ENCODE measurements at regions of chr22 and their contacts with region 1.

Region 1: DNA sequence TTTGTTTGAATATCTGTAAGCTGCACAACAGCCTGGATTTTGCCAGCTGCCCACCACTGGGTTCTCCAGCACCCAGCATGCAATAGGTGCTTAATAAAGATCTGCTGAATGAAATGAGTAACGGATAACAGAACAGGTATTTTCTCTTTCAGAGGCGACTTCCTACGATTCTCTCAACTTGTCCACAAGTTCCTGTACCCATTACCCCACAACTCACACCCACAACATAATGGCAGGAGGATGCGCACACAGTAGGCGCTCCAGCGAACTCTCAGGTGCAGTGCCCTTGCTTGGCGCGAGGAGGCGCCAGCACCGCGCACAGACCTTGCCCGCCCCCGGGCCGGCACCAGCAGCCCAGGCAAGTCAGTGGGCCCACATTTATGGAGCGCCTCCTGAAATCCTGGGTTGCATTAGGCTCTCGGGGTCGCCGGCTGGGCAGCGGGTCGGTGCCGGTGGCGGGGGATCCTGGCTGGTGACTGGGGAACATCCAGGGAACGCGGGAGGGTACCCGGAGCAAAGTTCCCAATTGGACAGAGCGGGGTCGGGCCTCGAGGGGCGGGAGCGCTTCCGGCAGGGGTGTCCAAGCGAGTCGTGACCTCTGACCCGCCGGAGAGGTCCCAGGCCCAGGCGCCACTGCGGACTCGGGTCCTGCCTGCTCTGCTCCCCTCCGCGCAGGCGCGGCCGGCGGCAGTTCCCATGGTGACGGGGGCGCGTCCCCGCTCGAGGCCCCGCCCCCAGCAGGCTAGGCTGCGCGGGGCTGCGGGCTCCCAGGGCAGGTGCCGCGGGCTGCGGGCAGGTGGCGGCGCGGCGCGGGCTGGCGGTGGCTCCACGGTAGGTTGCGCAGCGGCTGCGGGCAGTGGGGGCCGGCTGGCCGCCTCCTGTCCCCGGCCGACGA is at the start of gene KIAA1671:
- DNase-seq: peak; percentile 78
- H3K4me3 ChIP-seq: peak within 1 kb of the TSS; percentile 73 to 93 (median 86)
- H3K27ac ChIP-seq: peak within 1 kb of the TSS; percentile 92
- H3K4me1 ChIP-seq: peaks cover 41% of the 10 kb centered on the region
- H3K27me3 ChIP-seq: no peaks in the 10 kb centered on the region
- CTCF ChIP-seq: peak; percentile 97 to 99
- total RNA-seq, gene KIAA1671: 38.4 to 48.8 TPM

Region 2: DNA sequence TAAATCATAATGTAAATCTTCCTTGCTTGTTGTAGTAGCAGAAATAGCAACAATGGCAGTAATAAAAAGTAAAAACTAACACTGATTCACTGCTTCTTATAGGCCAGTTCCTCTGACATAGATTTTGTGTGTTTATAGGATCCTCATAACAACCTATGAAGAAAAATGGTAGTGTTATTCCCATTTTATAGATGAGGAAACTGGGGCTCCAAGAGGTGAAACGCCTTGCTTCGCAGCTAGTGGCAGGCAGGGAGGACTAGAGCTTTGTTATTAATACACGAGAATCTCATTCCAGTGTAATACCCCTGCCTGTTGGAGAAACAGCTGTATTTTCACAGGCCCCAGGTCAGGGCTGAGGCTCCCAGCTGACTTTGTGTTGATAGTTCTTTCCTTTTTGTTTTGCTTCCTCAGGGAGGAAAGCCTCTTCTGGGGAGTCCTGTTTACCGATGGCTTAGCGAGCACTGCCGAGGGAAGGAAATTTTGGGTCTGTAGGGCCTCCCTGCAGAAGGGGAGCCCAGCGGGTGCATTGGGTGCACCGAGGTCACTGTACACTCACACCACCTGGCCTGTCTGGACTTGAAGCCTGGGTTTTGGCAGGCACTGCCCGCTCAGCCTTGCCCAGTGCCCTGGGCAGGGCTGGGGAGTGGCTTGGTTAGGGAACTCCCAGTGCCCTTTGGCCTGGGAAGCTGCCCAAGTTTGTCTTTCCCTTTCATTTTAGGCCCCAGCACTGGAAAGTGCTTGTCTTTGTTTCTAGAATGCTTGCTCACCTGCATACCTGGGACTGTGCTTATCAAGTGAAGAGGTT is 13.8 kb after region 1 on chr22:
- CTCF ChIA-PET with region 1: no interaction called
- dilution Hi-C with region 1: no loop called
- in situ Hi-C with region 1: no loop called
- intact Hi-C with region 1: loop called (anchors 1 kb)
- DNase-seq: peak; percentile 92
- H3K4me3 ChIP-seq: peak overlapping the region in 1 of 3 experiments; percentile 6
- H3K27ac ChIP-seq: peak overlapping the region; percentile 54
- H3K4me1 ChIP-seq: peaks cover 59% of the 10 kb centered on the region
- H3K27me3 ChIP-seq: no peaks in the 10 kb centered on the region
- CTCF ChIP-seq: no peak

Region 3: GRCh38 chr22:24994070-24994763 is 42.0 kb after region 1 on chr22:
- CTCF ChIA-PET with region 1: no interaction called
- dilution Hi-C with region 1: no loop called
- in situ Hi-C with region 1: no loop called
- intact Hi-C with region 1: loop called (anchors 1 kb)
- DNase-seq: peak; percentile 97
- H3K4me3 ChIP-seq: no peak overlapping the region
- H3K27ac ChIP-seq: peak overlapping the region; percentile 85
- H3K4me1 ChIP-seq: peaks cover 68% of the 10 kb centered on the region
- H3K27me3 ChIP-seq: no peaks in the 10 kb centered on the region
- CTCF ChIP-seq: peak; percentile 26 to 68

Region 4: GRCh38 chr22:25027959-25028840 is 76.0 kb after region 1 on chr22:
- CTCF ChIA-PET with region 1: interaction called, 3 read pairs
- dilution Hi-C with region 1: loop called (anchors 5 kb)
- in situ Hi-C with region 1: no loop called
- intact Hi-C with region 1: loop called (anchors 1 kb)
- DNase-seq: no peak
- H3K4me3 ChIP-seq: no peak overlapping the region
- H3K27ac ChIP-seq: no peak overlapping the region
- H3K4me1 ChIP-seq: peaks cover 33% of the 10 kb centered on the region
- H3K27me3 ChIP-seq: no peaks in the 10 kb centered on the region
- CTCF ChIP-seq: peak; percentile 25 to 60

Region 5: DNA sequence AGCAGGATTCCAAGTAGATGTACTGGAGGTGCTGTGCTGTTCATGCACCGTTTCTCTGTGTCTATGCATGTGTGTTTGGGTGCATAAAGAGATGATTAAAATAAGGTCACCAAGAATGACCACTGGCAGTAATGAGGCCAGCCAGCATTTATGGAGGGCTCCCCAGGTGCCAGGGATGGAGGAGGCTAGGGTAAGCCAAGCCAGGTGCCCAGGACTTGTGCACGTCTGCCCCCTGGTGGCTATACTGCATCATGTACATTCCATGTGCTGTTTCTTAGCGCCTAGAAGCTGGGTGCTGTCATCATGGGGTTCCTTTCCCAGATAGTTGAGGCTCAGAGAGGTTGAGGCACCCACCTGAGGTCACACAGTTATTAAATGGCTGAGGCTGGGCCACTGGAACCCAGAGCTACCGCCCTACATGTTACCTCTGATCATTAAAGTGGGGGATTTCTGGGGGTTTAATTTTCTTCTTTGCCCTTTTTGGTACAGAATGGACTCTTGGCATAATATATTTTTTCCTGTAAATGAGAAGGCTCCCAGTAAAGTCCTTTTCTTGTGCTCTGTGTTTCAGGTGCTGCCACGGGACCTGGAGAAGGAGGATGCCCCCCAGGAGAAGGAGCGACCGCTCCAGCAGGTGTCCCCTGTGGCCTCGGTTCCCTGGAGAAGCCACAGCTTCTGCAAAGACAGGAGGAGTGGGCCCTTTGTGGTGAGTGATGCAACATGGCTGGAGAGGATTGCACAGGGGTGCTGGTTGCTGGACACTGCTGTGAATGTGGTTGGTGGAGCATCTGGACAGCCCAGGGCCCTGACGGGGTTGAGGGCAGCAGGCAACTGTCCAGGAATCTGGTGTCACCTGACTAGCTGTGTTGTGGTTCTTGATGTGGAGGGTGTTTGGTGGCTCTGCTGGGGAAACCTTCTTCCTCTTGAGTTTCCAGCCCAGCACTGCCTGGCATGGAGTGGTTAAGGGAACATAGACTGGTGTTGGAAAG is 96.8 kb after region 1 on chr22:
- CTCF ChIA-PET with region 1: no interaction called
- dilution Hi-C with region 1: loop called (anchors 5 kb)
- in situ Hi-C with region 1: loop called (anchors 5 kb)
- intact Hi-C with region 1: loop called (anchors 1 kb)
- DNase-seq: peak; percentile 45
- H3K4me3 ChIP-seq: no peak overlapping the region
- H3K27ac ChIP-seq: no peak overlapping the region
- H3K4me1 ChIP-seq: no peaks in the 10 kb centered on the region
- H3K27me3 ChIP-seq: no peaks in the 10 kb centered on the region
- CTCF ChIP-seq: peak; percentile 84 to 94

Region 6: GRCh38 chr22:25057013-25057881 is 105.1 kb after region 1 on chr22:
- CTCF ChIA-PET with region 1: no interaction called
- dilution Hi-C with region 1: loop called (anchors 5 kb)
- in situ Hi-C with region 1: no loop called
- intact Hi-C with region 1: loop called (anchors 1 kb)
- DNase-seq: peak; percentile 30
- H3K4me3 ChIP-seq: no peak overlapping the region
- H3K27ac ChIP-seq: no peak overlapping the region
- H3K4me1 ChIP-seq: peaks cover 9% of the 10 kb centered on the region
- H3K27me3 ChIP-seq: no peaks in the 10 kb centered on the region
- CTCF ChIP-seq: peak; percentile 90 to 92

Region 7: GRCh38 chr22:25172153-25172552 is 220.0 kb after region 1 on chr22:
- CTCF ChIA-PET with region 1: no interaction called
- dilution Hi-C with region 1: loop called (anchors 5 kb)
- in situ Hi-C with region 1: no loop called
- intact Hi-C with region 1: no loop called
- DNase-seq: no peak
- H3K4me3 ChIP-seq: no peak overlapping the region
- H3K27ac ChIP-seq: no peak overlapping the region
- H3K4me1 ChIP-seq: peaks cover 16% of the 10 kb centered on the region
- H3K27me3 ChIP-seq: no peaks in the 10 kb centered on the region
- CTCF ChIP-seq: peak; percentile 33 to 71